ENCODE measurements at regions of chr15 and their contacts with region 1.

Region 1: GRCh38 chr15:78007911-78008886 is 69.3 kb downstream of the TBC1D2B start:
- DNase-seq: peak; percentile 89
- H3K4me3 Mint-ChIP-seq: peak overlapping the region; percentile 12
- H3K27ac Mint-ChIP-seq: peak overlapping the region; percentile 90
- H3K4me1 Mint-ChIP-seq: peaks cover 60% of the 10 kb centered on the region
- H3K27me3 Mint-ChIP-seq: no peaks in the 10 kb centered on the region
- CTCF ChIP-seq: no peak

Region 2: DNA sequence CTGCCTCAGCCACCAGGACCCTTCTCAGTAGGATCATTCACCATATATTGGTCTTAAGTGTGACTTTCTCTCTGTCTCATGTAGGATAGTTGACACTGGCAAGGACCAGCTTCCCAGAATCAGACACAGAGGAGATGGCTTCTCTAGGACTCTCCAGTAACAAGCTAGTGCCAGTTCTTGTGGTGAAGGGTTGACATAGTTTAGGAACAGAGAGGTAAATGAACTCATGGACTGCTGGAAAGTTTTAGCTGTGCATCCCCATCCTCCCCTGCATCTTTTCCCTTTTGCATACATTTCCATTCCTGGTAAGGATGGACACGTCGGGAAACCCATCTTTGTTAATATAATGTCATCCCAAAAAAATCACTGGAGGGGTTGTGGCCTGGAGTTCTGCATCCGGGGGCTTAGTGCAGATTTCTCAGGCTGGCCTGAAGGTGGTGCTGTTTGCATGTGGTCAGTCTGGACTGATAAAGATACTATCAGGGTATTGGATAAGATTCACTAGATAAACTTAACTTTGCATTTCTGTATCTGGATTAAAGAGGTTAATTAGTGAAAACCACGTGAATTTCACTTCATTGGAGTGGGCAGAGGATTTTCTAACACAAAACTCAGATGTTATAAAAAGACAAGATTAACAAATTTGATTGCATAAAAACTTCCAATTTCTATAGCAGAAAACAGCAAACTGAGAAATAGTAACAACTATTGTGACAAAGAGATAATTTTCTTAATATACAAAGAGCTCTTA is 41.5 kb before region 1 on chr15:
- CTCF ChIA-PET with region 1: interaction called, 10 read pairs
- POLR2A ChIA-PET with region 1: no interaction called
- intact Hi-C with region 1: no loop called
- DNase-seq: peak; percentile 61
- H3K4me3 Mint-ChIP-seq: no peak overlapping the region
- H3K27ac Mint-ChIP-seq: no peak overlapping the region
- H3K4me1 Mint-ChIP-seq: peaks cover 3% of the 10 kb centered on the region
- H3K27me3 Mint-ChIP-seq: peaks cover 20% of the 10 kb centered on the region
- CTCF ChIP-seq: peak; percentile 91

Region 3: GRCh38 chr15:77993374-77993911 is 14.8 kb before region 1 on chr15:
- CTCF ChIA-PET with region 1: interaction called, 3 read pairs
- POLR2A ChIA-PET with region 1: interaction called, 41 read pairs
- intact Hi-C with region 1: no loop called
- DNase-seq: no peak
- H3K4me3 Mint-ChIP-seq: no peak overlapping the region
- H3K27ac Mint-ChIP-seq: peak overlapping the region; percentile 90
- H3K4me1 Mint-ChIP-seq: peaks cover 26% of the 10 kb centered on the region
- H3K27me3 Mint-ChIP-seq: no peaks in the 10 kb centered on the region
- CTCF ChIP-seq: no peak

Region 4: DNA sequence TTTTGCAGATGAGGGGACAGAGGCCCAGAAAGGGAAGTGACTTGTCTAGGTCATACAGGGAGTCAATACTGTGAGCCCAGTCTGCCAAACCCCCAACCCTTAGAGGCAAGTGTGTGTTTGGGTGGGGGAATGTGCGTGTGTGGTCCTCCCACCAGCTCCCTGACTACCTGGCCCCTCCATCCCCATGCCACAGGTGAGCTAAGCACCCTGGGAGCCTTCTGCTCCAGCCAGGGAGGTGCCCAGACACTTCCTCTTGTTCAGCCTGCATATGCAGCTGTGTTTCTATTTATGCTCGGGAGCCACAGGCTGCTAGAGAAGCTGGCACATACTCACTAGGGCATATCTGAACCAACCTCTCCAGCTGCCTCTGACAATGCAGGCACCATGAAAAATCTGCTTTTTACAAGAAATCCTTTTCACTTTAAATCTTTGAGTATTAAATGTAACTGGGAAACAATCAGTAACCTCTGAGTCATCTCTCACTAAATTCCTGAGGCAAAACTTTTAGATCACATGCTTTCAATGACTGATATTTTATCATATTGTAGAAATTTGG is 48.6 kb after region 1 on chr15:
- CTCF ChIA-PET with region 1: interaction called, 3 read pairs
- POLR2A ChIA-PET with region 1: interaction called, 10 read pairs
- intact Hi-C with region 1: no loop called
- DNase-seq: no peak
- H3K4me3 Mint-ChIP-seq: no peak overlapping the region
- H3K27ac Mint-ChIP-seq: peak overlapping the region; percentile 95
- H3K4me1 Mint-ChIP-seq: peaks cover 32% of the 10 kb centered on the region
- H3K27me3 Mint-ChIP-seq: no peaks in the 10 kb centered on the region
- CTCF ChIP-seq: no peak

Region 5: DNA sequence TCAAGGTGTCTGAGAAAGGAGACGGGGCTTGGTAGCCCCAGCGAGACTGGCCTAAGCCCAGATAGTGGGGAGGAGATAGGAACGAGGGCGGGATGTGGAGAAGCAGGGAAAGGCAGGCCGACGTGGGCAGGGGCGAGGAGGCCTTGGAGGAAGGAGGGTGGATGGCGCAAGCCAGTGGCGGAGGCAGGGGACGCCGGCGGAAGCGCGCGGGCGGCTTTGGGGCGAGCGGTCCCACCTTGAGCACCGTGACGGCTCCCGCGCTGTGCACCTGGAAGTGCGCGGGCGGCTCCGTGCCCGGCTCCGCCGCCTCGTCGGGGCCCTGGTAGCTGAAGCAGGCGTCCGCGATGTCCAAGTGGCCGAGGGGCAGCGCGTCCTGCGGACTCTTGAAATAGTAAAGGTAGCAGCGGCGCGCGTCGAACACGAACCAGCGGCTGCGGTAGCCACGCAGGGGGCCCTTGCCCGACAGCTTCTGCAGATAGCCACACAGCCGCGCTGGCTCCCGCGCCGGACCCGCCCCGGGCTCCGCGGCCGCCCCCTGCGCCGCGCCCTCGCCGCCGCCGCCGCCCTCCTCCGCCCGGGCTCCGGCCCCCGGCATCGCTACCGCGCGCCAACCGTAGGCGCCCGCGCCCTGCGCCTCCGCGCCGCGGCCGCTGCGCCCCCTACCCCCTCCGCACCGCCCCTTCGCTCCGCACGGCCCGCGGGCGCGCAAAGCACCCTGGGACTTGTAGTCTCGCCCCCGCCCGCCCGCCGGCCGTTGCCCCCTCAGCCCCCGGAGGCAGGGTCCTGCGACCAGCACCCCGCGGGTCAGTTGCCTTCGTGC is 69.1 kb after region 1 on chr15 and contains the start of gene TBC1D2B:
- CTCF ChIA-PET with region 1: interaction called, 3 read pairs
- POLR2A ChIA-PET with region 1: interaction called, 6 read pairs
- intact Hi-C with region 1: loop called (anchors 2 kb)
- DNase-seq: peak; percentile 41
- H3K4me3 Mint-ChIP-seq: peak within 1 kb of the TSS; percentile 92
- H3K27ac Mint-ChIP-seq: peak within 1 kb of the TSS; percentile 67
- H3K4me1 Mint-ChIP-seq: peaks cover 25% of the 10 kb centered on the region
- H3K27me3 Mint-ChIP-seq: no peaks in the 10 kb centered on the region
- CTCF ChIP-seq: no peak
- total RNA-seq, gene TBC1D2B: 21.2 and 21.6 TPM in 2 replicates

Region 6: GRCh38 chr15:78097713-78098112 is 89.5 kb after region 1 on chr15:
- CTCF ChIA-PET with region 1: no interaction called
- POLR2A ChIA-PET with region 1: no interaction called
- intact Hi-C with region 1: no loop called
- DNase-seq: no peak
- H3K4me3 Mint-ChIP-seq: no peak overlapping the region
- H3K27ac Mint-ChIP-seq: no peak overlapping the region
- H3K4me1 Mint-ChIP-seq: no peaks in the 10 kb centered on the region
- H3K27me3 Mint-ChIP-seq: no peaks in the 10 kb centered on the region
- CTCF ChIP-seq: no peak